ENCODE measurements at regions of chr1 and their contacts with region 1.

Region 1: DNA sequence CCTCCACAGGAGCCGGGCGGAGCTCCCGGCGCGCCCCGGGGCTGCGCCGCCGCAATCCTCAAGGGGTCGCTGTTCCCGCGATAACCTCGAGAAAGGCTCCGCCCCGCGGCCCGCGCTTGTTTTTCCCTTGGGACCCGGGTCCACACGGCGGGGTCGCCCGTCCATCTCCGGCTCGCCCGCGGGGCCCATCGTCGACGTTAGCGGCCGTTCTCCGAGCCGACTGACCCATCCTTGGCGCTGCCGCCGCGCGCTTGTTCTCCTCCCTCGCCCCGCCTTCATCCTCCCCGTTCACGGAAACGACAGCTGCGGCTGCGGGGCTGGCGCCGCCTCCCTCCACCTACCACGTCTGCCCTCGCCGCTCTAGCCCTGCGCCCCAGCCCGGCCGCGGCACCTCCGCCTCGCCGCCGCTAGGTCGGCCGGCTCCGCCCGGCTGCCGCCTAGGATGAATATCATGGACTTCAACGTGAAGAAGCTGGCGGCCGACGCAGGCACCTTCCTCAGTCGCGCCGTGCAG is at the start of gene SH3GLB1:
- DNase-seq: peak; percentile 91 to 93 (median 92)
- H3K4me3 ChIP-seq: peak within 1 kb of the TSS; percentile 60 to 93
- H3K4me3 Mint-ChIP-seq: peak within 1 kb of the TSS; percentile 95 to 99 (median 98)
- H3K27ac ChIP-seq: peak within 1 kb of the TSS; percentile 94
- H3K27ac Mint-ChIP-seq: peak within 1 kb of the TSS; percentile 91 to 99 (median 98)
- H3K4me1 ChIP-seq: peaks cover 50% of the 10 kb centered on the region
- H3K4me1 Mint-ChIP-seq: peaks cover 32 to 66% (median 44%) of the 10 kb centered on the region in 4 donors
- H3K27me3 ChIP-seq: no peaks in the 10 kb centered on the region
- H3K27me3 Mint-ChIP-seq: peaks cover 0 to 3% of the 10 kb centered on the region in 2 donors
- total RNA-seq, gene SH3GLB1: 55.4 to 59.6 TPM

Region 2: DNA sequence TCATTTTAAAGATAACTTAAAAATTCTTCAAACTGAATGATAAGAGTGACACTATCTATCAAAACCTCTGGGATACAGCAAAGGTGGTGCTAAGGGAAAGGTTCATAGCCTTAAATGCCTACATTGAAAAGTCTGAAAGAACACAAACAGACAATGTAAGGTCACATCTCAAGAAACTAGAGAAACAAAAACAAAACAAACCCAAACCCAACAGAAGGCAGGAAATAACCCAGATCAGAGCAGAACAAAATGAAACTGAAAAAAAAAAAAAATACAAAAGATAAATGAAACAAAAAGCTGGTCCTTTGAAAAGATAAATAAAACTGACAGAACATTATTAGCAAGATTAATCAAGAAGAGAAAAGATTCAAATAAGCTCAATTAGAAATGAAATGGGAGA is 315.2 kb before region 1 on chr1:
- CTCF ChIA-PET with region 1: interaction called, 13 read pairs
- POLR2A ChIA-PET with region 1: interaction called, 54 read pairs
- intact Hi-C with region 1: no loop called
- DNase-seq: peak in 4 of 5 donors; percentile 51 to 66 (median 55)
- H3K4me3 ChIP-seq: peak overlapping the region; percentile 9 to 12
- H3K4me3 Mint-ChIP-seq: peak overlapping the region; percentile 59 to 88 (median 83)
- H3K27ac ChIP-seq: peak overlapping the region; percentile 39
- H3K27ac Mint-ChIP-seq: peak overlapping the region; percentile 82 to 98 (median 93)
- H3K4me1 ChIP-seq: peaks cover 67% of the 10 kb centered on the region
- H3K4me1 Mint-ChIP-seq: peaks cover 45 to 68% (median 50%) of the 10 kb centered on the region in 4 donors
- H3K27me3 ChIP-seq: no peaks in the 10 kb centered on the region
- H3K27me3 Mint-ChIP-seq: no peaks in the 10 kb centered on the region

Region 3: DNA sequence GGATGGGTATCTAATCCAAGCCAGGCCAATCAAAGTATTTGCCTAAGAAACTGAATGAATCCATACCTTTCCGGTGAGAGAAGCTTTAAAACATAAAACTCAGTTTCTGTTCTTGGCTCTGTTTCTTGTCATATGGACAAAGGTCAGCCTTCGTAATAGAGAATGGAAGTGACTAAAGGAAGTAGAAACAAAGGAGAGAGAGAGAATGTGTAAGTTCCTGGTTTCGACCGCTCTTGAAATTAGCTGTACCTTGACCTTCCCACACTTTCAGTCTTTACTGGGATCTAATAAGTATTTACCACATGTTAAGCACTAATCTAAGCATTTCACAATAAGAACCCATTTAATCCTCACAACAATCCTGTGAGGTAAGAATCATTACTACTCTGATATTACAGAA is 177.2 kb before region 1 on chr1:
- CTCF ChIA-PET with region 1: no interaction called
- POLR2A ChIA-PET with region 1: no interaction called
- intact Hi-C with region 1: no loop called
- DNase-seq: no peak
- H3K4me3 ChIP-seq: no peak overlapping the region
- H3K4me3 Mint-ChIP-seq: no peak overlapping the region
- H3K27ac ChIP-seq: no peak overlapping the region
- H3K27ac Mint-ChIP-seq: no peak overlapping the region
- H3K4me1 ChIP-seq: no peaks in the 10 kb centered on the region
- H3K4me1 Mint-ChIP-seq: no peaks in the 10 kb centered on the region
- H3K27me3 ChIP-seq: no peaks in the 10 kb centered on the region
- H3K27me3 Mint-ChIP-seq: peaks cover 2 to 3% of the 10 kb centered on the region in 2 donors

Region 4: DNA sequence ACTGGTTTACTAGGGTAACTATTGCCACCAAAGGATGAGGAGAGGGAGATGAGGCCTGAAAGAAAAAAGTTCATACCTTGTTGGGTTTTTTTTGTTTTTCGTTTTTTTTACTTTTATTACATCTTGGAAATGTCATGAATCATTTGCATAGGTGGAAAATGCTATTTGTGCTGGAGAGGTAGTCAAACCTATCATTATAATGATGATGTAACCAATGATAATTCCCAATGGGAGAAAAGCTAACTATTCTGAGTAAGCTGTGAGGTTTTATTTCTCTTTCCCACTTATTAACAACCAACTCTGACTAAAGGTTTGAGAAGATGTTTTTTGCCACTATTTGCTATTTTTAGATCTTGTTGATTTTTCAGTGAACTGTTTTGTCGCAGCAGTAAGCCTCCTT is 28.8 kb after region 1 on chr1:
- CTCF ChIA-PET with region 1: interaction called, 23 read pairs
- POLR2A ChIA-PET with region 1: interaction called, 45 read pairs
- intact Hi-C with region 1: no loop called
- DNase-seq: no peak
- H3K4me3 ChIP-seq: no peak overlapping the region
- H3K4me3 Mint-ChIP-seq: no peak overlapping the region
- H3K27ac ChIP-seq: no peak overlapping the region
- H3K27ac Mint-ChIP-seq: peak overlapping the region in 5 of 7 donors; percentile 7 to 73 (median 30)
- H3K4me1 ChIP-seq: no peaks in the 10 kb centered on the region
- H3K4me1 Mint-ChIP-seq: peaks cover 3 to 11% (median 4%) of the 10 kb centered on the region in 4 donors
- H3K27me3 ChIP-seq: no peaks in the 10 kb centered on the region
- H3K27me3 Mint-ChIP-seq: no peaks in the 10 kb centered on the region

Region 5: DNA sequence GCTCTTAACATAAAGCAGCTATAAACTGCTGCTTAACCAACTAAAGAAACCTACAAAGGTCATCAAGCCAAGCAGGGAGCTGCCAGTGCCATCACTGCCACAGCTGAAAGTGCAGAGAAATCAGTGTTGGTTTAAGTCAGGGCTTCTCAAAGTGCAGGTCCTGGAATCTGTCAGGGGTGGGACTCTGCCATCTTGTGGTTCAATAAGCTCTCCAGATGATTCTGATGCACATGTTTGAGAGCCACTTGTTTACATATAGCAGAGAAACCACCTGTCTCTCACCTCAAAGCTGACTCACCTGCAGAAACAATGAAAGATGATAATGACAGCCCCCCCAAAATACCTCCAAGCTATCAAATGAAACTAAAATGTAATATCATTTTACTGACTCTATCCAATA is 49.2 kb after region 1 on chr1:
- CTCF ChIA-PET with region 1: interaction called, 14 read pairs
- POLR2A ChIA-PET with region 1: interaction called, 8 read pairs
- intact Hi-C with region 1: no loop called
- DNase-seq: peak in 1 of 5 donors; percentile 10
- H3K4me3 ChIP-seq: no peak overlapping the region
- H3K4me3 Mint-ChIP-seq: no peak overlapping the region
- H3K27ac ChIP-seq: no peak overlapping the region
- H3K27ac Mint-ChIP-seq: no peak overlapping the region
- H3K4me1 ChIP-seq: no peaks in the 10 kb centered on the region
- H3K4me1 Mint-ChIP-seq: peaks cover 0 to 4% (median 0%) of the 10 kb centered on the region in 4 donors
- H3K27me3 ChIP-seq: no peaks in the 10 kb centered on the region
- H3K27me3 Mint-ChIP-seq: peaks cover 10 to 12% of the 10 kb centered on the region in 2 donors

Region 6: GRCh38 chr1:87045761-87046304 is 341.3 kb after region 1 on chr1:
- CTCF ChIA-PET with region 1: no interaction called
- POLR2A ChIA-PET with region 1: no interaction called
- intact Hi-C with region 1: loop called (anchors 10 kb)
- DNase-seq: peak; percentile 68 to 83 (median 76)
- H3K4me3 ChIP-seq: no peak overlapping the region
- H3K4me3 Mint-ChIP-seq: peak overlapping the region in 7 of 8 donors; percentile 34 to 78 (median 44)
- H3K27ac ChIP-seq: no peak overlapping the region
- H3K27ac Mint-ChIP-seq: peak overlapping the region; percentile 62 to 98 (median 96)
- H3K4me1 ChIP-seq: peaks cover 22% of the 10 kb centered on the region
- H3K4me1 Mint-ChIP-seq: peaks cover 29 to 41% (median 35%) of the 10 kb centered on the region in 4 donors
- H3K27me3 ChIP-seq: no peaks in the 10 kb centered on the region
- H3K27me3 Mint-ChIP-seq: no peaks in the 10 kb centered on the region

Region 7: GRCh38 chr1:87335175-87335884 is 630.8 kb after region 1 on chr1:
- CTCF ChIA-PET with region 1: no interaction called
- POLR2A ChIA-PET with region 1: interaction called, 13 read pairs
- intact Hi-C with region 1: loop called (anchors 10 kb)
- DNase-seq: peak; percentile 48 to 76 (median 66)
- H3K4me3 ChIP-seq: peak overlapping the region in 1 of 2 donors; percentile 51
- H3K4me3 Mint-ChIP-seq: peak overlapping the region; percentile 90 to 97 (median 92)
- H3K27ac ChIP-seq: peak overlapping the region; percentile 54
- H3K27ac Mint-ChIP-seq: peak overlapping the region; percentile 65 to 96 (median 93)
- H3K4me1 ChIP-seq: peaks cover 51% of the 10 kb centered on the region
- H3K4me1 Mint-ChIP-seq: peaks cover 38 to 73% (median 50%) of the 10 kb centered on the region in 4 donors
- H3K27me3 ChIP-seq: no peaks in the 10 kb centered on the region
- H3K27me3 Mint-ChIP-seq: peaks cover 0 to 3% of the 10 kb centered on the region in 2 donors